Colonic mucosa (tissue), 4 donors: ENCODE measurements at regions of chr4 and their contacts with region 1.

Region 1: GRCh38 chr4:20773144-20773997 is 73.1 kb downstream of the PACRGL start:
- DNase-seq: peak; percentile 40
- H3K4me3 ChIP-seq: no peak overlapping the region
- H3K27ac ChIP-seq: no peak overlapping the region
- H3K4me1 ChIP-seq: no peaks in the 10 kb centered on the region
- H3K27me3 ChIP-seq: no peaks in the 10 kb centered on the region
- CTCF ChIP-seq: peak; percentile 63

Region 2: GRCh38 chr4:21134994-21135393 is 361.6 kb after region 1 on chr4:
- intact Hi-C with region 1: loop called (anchors 2 kb)
- DNase-seq: no peak
- H3K4me3 ChIP-seq: no peak overlapping the region
- H3K27ac ChIP-seq: no peak overlapping the region
- H3K4me1 ChIP-seq: no peaks in the 10 kb centered on the region
- H3K27me3 ChIP-seq: no peaks in the 10 kb centered on the region
- CTCF ChIP-seq: peak; percentile 33

Region 3: GRCh38 chr4:21469438-21470300 is 696.3 kb after region 1 on chr4:
- intact Hi-C with region 1: loop called (anchors 5 kb)
- DNase-seq: no peak
- H3K4me3 ChIP-seq: no peak overlapping the region
- H3K27ac ChIP-seq: no peak overlapping the region
- H3K4me1 ChIP-seq: no peaks in the 10 kb centered on the region
- H3K27me3 ChIP-seq: no peaks in the 10 kb centered on the region
- CTCF ChIP-seq: peak; percentile 50